A673 (cell line): ENCODE measurements at regions of chr1 and their contacts with region 1.

Region 1: GRCh38 chr1:182716740-182717720 is 32.6 kb upstream of the RGS8 start:
- DNase-seq: no peak
- H3K4me3 ChIP-seq: no peak overlapping the region
- H3K27ac ChIP-seq: no peak overlapping the region
- H3K4me1 ChIP-seq: peaks cover 5% of the 10 kb centered on the region
- H3K27me3 ChIP-seq: no peaks in the 10 kb centered on the region
- CTCF ChIP-seq: no peak

Region 2: DNA sequence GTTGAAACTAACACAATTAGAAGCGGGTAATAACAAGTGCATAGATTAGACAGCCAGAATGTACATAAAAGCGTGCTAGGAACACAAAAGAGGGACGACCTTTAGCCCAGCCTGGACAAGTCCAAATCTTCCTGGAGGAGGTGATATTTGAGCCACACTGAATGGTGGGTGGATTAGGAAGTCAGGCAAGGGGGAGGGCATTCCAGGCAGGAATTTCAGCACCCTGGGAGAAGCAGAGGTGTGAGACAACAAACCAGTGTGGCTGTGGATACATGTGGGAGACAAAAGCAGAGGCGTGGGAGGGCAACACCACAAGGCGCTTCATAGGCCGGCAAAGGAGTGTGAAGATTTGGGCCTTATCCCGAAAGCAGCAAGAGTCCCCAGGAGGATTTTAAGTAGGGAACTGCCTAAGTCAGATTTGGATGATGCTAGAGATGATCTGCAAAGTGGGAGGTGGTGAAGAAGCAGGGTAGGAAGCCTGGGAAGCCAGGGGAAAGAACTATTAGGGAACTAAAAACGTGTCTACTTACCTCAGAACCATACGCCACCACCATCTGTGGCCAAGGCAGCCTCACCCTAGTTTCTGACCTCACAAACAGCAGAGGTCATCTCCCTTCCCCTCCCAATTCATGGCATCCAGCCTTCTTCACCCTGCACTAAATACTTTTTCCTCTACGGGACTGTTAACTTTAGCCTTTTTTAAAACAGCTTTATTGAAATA is 407.2 kb before region 1 on chr1:
- CTCF ChIA-PET with region 1: no interaction called
- POLR2A ChIA-PET with region 1: interaction called, 13 read pairs
- intact Hi-C with region 1: no loop called
- DNase-seq: no peak
- H3K4me3 ChIP-seq: no peak overlapping the region
- H3K27ac ChIP-seq: no peak overlapping the region
- H3K4me1 ChIP-seq: peaks cover 2% of the 10 kb centered on the region
- H3K27me3 ChIP-seq: peaks cover 5% of the 10 kb centered on the region
- CTCF ChIP-seq: no peak